ENCODE measurements at regions of chr11 and their contacts with region 1.

Region 1: GRCh38 chr11:44899959-44900358 is 50.7 kb downstream of the TP53I11 start:
- DNase-seq: no peak
- ATAC-seq: no peak

Region 2: GRCh38 chr11:44627911-44628729 is 271.8 kb before region 1 on chr11:
- intact Hi-C with region 1: loop called (anchors 5 kb)
- DNase-seq: peak; percentile 76
- ATAC-seq: peak; percentile 87

Region 3: GRCh38 chr11:45225277-45225676 is 325.3 kb after region 1 on chr11:
- intact Hi-C with region 1: no loop called
- DNase-seq: no peak
- ATAC-seq: no peak